Lower lobe of right lung (tissue), 2 donors: ENCODE measurements at regions of chr14 and their contacts with region 1.

Region 1: DNA sequence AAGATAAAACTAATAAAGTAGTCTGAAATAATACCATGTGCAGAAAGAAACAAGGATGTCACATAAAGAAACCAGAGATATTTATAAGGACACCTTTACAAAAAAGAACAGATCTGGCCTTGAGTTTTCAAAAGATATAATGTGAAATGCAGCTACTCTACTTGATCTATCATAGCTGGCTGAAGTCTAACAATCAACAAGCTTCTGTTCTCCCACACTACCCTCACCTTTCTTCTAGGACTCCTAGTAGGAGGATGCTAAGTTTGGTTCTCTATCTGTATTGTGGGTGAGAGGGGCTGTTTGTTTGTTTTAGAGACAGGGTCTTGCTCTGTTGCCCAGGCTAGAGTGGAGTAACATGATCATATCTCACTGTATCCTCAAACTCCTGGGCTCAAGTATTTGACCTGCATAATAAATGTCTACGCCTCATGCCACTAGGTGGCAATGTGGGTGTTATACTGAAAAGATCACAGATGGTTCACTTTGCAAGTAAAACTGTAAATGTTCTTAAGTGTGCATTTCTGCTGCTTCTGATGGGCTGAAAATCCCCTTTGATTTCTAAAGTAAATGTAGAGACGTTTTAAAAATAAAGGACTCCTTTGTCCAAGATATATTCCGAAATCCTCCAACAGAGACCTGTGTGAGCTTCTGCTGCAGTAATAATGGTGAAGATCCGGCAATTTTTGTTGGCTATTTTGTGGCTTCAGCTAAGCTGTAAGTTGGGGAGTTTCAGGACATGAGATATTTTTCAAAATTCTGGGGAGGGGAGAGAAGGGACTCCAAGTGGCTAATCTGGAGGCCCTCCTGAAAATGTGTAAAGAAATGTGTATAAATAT is 269.3 kb downstream of the DAD1 start:
- DNase-seq: no peak
- ATAC-seq: peak; percentile 72 to 90
- H3K4me3 ChIP-seq: no peak overlapping the region
- H3K27ac ChIP-seq: no peak overlapping the region
- H3K4me1 ChIP-seq: no peaks in the 10 kb centered on the region
- H3K27me3 ChIP-seq: no peaks in the 10 kb centered on the region
- CTCF ChIP-seq: peak; percentile 64

Region 2: GRCh38 chr14:22375321-22375930 is 55.7 kb after region 1 on chr14:
- intact Hi-C with region 1: loop called (anchors 5 kb)
- DNase-seq: no peak
- ATAC-seq: peak in 1 of 2 donors; percentile 49
- H3K4me3 ChIP-seq: no peak overlapping the region
- H3K27ac ChIP-seq: no peak overlapping the region
- H3K4me1 ChIP-seq: peaks cover 8% of the 10 kb centered on the region
- H3K27me3 ChIP-seq: no peaks in the 10 kb centered on the region
- CTCF ChIP-seq: peak; percentile 51

Region 3: DNA sequence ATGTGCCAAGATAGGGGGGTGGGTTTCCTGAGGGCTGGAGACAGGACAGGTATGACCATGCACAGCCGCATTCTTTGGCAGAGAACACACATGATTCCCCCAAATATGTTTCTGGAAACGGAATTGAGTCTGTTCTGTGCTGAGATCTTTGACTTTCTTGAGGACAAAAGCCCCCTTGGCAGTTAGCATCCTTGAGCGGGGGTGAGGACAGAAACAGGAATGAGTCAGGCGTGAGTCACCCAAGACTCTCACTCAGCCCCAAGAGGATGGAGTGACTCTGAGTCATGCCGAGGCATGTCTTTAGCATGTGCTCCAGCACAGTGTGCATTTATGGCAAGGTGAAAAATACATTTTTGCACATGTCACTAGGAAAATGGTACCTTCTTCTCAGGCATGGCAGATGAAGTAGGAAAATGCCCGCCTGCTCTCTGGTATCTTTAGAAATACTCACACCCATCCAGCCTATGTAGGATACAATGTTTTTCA is 217.2 kb after region 1 on chr14:
- intact Hi-C with region 1: no loop called
- DNase-seq: no peak
- ATAC-seq: peak; percentile 91 to 92
- H3K4me3 ChIP-seq: no peak overlapping the region
- H3K27ac ChIP-seq: peak overlapping the region; percentile 28
- H3K4me1 ChIP-seq: peaks cover 28% of the 10 kb centered on the region
- H3K27me3 ChIP-seq: no peaks in the 10 kb centered on the region
- CTCF ChIP-seq: no peak